SK-N-SH (cell line): ENCODE measurements at regions of chr22 and their contacts with region 1.

Region 1: DNA sequence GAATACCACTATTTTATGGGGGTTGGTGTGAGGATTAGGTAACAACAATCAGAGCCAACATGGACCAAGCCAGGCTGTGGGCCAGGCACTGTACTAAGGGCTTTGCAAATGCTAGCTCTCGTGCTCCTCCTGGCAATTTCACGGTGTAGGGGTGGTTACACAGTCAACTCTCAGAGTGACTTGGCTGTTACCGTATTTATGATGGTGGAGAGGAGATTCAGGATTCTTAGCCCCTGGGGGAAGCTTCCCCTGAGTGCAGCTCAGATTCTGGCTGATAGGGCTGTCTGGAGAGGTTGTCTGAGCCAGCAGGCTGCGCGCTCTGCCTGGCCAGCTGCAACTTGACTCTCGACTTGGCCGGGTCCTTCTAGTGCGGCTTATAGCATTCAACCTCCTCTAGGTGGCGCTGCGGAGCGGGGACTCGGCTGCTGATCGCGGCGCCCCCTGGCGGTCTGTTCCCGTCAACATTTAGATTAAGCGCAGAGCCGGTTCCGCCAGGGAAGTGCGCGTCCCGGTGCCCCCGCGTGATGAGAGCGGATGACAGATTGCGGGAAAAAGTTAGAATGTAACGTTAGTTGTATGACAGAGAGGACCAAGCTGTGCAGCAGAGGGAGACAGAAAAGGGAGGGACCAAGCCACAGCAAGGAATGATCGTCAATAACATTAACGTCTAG is 4.5 kb upstream of the NCF4 start:
- DNase-seq: peak; percentile 89
- H3K4me3 ChIP-seq: peak overlapping the region in 1 of 2 experiments; percentile 54; a peak in 1 of 4 replicates
- H3K27ac ChIP-seq: peak overlapping the region in 1 of 2 experiments; percentile 41; a peak in 1 of 4 replicates
- H3K4me1 ChIP-seq: peaks cover 0 to 9% of the 10 kb centered on the region in 2 experiments; a peak in 1 of 4 replicates
- H3K27me3 ChIP-seq: peaks cover 11% of the 10 kb centered on the region
- CTCF ChIP-seq: peak; percentile 100
- EP300 ChIP-seq: no peak; a peak in 1 of 4 replicates
- RAD21 ChIP-seq: peak; percentile 80

Region 2: DNA sequence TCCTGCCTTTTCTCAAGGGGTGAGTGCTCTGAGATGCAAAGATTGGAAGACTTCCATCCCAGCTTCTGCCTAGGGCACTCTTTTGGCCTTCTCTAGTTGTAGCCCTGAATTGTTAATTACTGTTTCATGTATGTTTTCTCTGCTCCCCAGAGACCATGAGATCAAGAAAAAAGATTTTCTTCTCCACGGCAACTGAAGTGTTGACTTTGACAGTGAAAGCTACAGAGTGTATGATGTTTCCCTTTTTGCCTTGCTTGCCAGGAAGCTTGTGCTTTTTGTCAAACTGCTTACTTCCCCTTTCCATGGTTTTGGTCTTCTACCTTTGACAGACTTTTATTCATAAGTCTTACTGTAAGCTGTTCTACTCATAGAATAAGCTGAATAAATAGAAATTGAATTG is 304.0 kb before region 1 on chr22:
- CTCF ChIA-PET with region 1: interaction called, 61 read pairs
- POLR2A ChIA-PET with region 1: interaction called, 3 read pairs
- DNase-seq: no peak
- H3K4me3 ChIP-seq: no peak overlapping the region
- H3K27ac ChIP-seq: no peak overlapping the region
- H3K4me1 ChIP-seq: peaks cover 0 to 2% of the 10 kb centered on the region in 2 experiments; a peak in 1 of 4 replicates
- H3K27me3 ChIP-seq: peaks cover 31% of the 10 kb centered on the region
- CTCF ChIP-seq: no peak
- EP300 ChIP-seq: no peak
- RAD21 ChIP-seq: no peak

Region 3: DNA sequence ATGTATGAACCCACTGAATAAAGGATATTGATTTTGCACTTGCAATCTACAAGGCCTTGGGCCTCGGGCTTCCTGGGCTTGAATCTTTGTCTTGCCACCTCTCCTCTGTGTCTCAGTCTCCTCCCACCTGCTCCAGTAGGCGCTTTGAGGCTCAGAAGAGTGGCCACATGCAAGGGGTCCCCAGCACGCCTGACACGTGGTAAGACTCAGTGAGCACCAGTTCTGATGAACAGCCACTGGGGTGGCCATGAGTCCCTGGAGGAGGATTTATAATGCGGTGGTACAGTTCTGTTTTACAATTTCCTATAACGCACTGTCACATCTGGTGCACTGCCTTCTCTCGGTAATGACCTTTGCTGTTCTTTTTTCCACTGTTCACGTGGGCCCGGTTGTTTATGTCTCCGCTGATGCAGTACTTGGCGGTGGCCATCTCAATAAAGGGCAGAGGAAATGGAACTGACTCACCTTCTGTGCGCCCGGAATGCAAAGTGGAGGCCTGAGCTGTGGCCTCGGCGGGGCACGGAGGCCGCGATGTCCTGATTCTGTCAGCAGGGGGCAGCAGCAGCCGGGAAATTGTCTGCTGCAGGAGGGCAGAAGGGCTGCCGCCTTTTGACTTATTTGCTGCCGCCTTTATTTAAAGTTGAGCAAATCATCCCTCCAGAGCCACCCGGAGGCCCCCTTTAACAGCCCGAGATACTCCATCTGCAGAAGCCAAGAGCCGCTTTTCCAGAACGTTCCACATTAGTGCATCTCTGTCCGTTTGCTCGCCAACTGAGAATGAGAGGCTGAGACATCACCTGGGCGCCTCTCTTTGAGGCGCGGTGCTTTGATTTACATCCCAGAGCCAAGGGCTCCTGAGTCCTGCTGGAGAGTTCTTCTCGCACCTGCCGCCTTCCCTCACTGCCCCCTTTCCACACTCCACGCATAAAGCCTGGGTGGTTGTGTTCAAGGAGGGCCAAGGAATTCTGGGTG is 74.3 kb before region 1 on chr22:
- CTCF ChIA-PET with region 1: interaction called, 159 read pairs
- POLR2A ChIA-PET with region 1: no interaction called
- DNase-seq: peak; percentile 86
- H3K4me3 ChIP-seq: peak overlapping the region in 1 of 2 experiments; percentile 30; a peak in 1 of 4 replicates
- H3K27ac ChIP-seq: peak overlapping the region in 1 of 2 experiments; percentile 4; a peak in 1 of 4 replicates
- H3K4me1 ChIP-seq: peaks cover 0 to 2% of the 10 kb centered on the region in 2 experiments; a peak in 1 of 4 replicates
- H3K27me3 ChIP-seq: peaks cover 17% of the 10 kb centered on the region; the same call in 1 of the 2 replicates
- CTCF ChIP-seq: peak; percentile 93
- EP300 ChIP-seq: no peak
- RAD21 ChIP-seq: peak; percentile 87

Region 4: GRCh38 chr22:36816636-36817524 is 39.4 kb before region 1 on chr22 and contains the start of gene PVALB:
- CTCF ChIA-PET with region 1: interaction called, 32 read pairs
- POLR2A ChIA-PET with region 1: no interaction called
- DNase-seq: peak; percentile 91
- H3K4me3 ChIP-seq: peak within 1 kb of the TSS in 1 of 2 experiments; percentile 14; a peak in 1 of 4 replicates
- H3K27ac ChIP-seq: no peak within 1 kb of the TSS
- H3K4me1 ChIP-seq: peaks cover 0 to 8% of the 10 kb centered on the region in 2 experiments; a peak in 1 of 4 replicates
- H3K27me3 ChIP-seq: peaks cover 61% of the 10 kb centered on the region
- CTCF ChIP-seq: no peak
- EP300 ChIP-seq: no peak
- RAD21 ChIP-seq: no peak
- polyA plus RNA-seq, gene PVALB: not detected in 2 replicates

Region 5: GRCh38 chr22:36839356-36840073 is 16.7 kb before region 1 on chr22:
- CTCF ChIA-PET with region 1: interaction called, 85 read pairs
- POLR2A ChIA-PET with region 1: no interaction called
- DNase-seq: no peak
- H3K4me3 ChIP-seq: no peak overlapping the region
- H3K27ac ChIP-seq: no peak overlapping the region
- H3K4me1 ChIP-seq: no peaks in the 10 kb centered on the region
- H3K27me3 ChIP-seq: peaks cover 20% of the 10 kb centered on the region; the same call in 1 of the 2 replicates
- CTCF ChIP-seq: no peak
- EP300 ChIP-seq: no peak
- RAD21 ChIP-seq: no peak

Region 6: DNA sequence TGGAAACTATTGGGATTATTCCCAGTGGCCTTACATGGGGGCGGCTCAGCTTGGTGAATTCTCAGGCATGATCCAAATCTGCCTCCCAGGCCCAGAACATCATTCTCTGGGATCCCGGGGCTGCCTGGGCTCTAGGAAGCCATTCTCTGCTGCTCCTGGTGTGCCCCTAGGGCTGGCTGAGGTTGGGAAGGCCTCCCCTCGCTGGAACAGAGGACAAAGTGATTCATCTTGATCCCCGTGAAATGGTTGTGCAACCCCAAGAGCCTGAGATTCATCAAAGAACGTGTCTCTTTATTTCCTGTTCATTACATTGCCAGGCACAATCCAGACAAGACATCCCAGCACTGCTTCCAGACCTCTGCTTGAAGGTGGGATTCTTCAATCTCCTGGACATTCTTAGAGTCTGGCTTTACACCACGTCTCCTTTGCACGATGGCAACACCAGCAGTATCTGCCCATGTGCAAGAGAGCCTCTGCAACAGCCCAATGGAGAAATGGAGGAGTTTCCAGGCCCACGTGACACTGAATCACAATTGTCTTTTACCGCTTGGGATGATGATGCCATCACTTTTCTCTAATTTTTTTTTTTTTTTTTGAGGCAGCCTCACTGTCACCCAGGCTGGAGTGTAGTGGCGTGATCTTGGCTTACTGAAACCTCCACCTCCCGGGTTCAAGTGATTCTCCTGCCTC is 110.7 kb after region 1 on chr22:
- CTCF ChIA-PET with region 1: interaction called, 19 read pairs
- POLR2A ChIA-PET with region 1: no interaction called
- DNase-seq: no peak
- H3K4me3 ChIP-seq: no peak overlapping the region
- H3K27ac ChIP-seq: no peak overlapping the region
- H3K4me1 ChIP-seq: no peaks in the 10 kb centered on the region
- H3K27me3 ChIP-seq: peaks cover 26% of the 10 kb centered on the region; the same call in 1 of the 2 replicates
- CTCF ChIP-seq: no peak
- EP300 ChIP-seq: no peak
- RAD21 ChIP-seq: no peak